H1 (cell line): ENCODE measurements at regions of chr11 and their contacts with region 1.

Region 1: GRCh38 chr11:63478896-63479295 is 12.1 kb downstream of the PLAAT5 start:
- DNase-seq: peak; percentile 23 to 60
- H3K4me3 ChIP-seq: no peak overlapping the region
- H3K27ac ChIP-seq: no peak overlapping the region
- H3K4me1 ChIP-seq: peaks cover 0 to 5% (median 2%) of the 10 kb centered on the region in 4 experiments; a peak in 2 of 7 replicates
- H3K27me3 ChIP-seq: no peaks in the 10 kb centered on the region
- CTCF ChIP-seq: peak in 2 of 3 experiments; percentile 90 to 91; a peak in 3 of 4 replicates
- EP300 ChIP-seq: no peak
- POLR2A ChIP-seq: no peak
- RAD21 ChIP-seq: peak; percentile 98 to 100

Region 2: GRCh38 chr11:63490551-63491239 is 11.8 kb after region 1 on chr11 and contains the start of gene PLAAT5:
- CTCF ChIA-PET with region 1: interaction called, 63 read pairs
- POLR2A ChIA-PET with region 1: interaction called, 11 read pairs
- DNase-seq: peak in 1 of 2 experiments; percentile 73
- H3K4me3 ChIP-seq: peak within 1 kb of the TSS; percentile 53 to 69 (median 61)
- H3K27ac ChIP-seq: 0 out of 2 replicates have a peak within 1 kb of the TSS, but pooled peaks have one; percentile 23
- H3K4me1 ChIP-seq: peaks cover 6 to 10% (median 9%) of the 10 kb centered on the region in 4 experiments; a peak in 5 of 7 replicates
- H3K27me3 ChIP-seq: no peaks in the 10 kb centered on the region; a peak in 1 of 7 replicates
- CTCF ChIP-seq: no peak
- EP300 ChIP-seq: no peak
- POLR2A ChIP-seq: no peak; a peak in 1 of 3 replicates
- RAD21 ChIP-seq: no peak
- total RNA-seq, gene PLAAT5: 12.8 and 16.0 TPM in 2 replicates

Region 3: GRCh38 chr11:63530021-63530420 is 51.1 kb after region 1 on chr11:
- CTCF ChIA-PET with region 1: interaction called, 10 read pairs
- POLR2A ChIA-PET with region 1: interaction called, 3 read pairs
- DNase-seq: no peak
- H3K4me3 ChIP-seq: peak overlapping the region in 3 of 4 experiments; percentile 11 to 37 (median 22); a peak in 4 of 8 replicates
- H3K27ac ChIP-seq: peak overlapping the region; percentile 89
- H3K4me1 ChIP-seq: peaks cover 16 to 31% (median 30%) of the 10 kb centered on the region in 4 experiments; a peak in 6 of 7 replicates
- H3K27me3 ChIP-seq: no peaks in the 10 kb centered on the region
- CTCF ChIP-seq: no peak
- EP300 ChIP-seq: no peak
- POLR2A ChIP-seq: no peak
- RAD21 ChIP-seq: no peak

Region 4: DNA sequence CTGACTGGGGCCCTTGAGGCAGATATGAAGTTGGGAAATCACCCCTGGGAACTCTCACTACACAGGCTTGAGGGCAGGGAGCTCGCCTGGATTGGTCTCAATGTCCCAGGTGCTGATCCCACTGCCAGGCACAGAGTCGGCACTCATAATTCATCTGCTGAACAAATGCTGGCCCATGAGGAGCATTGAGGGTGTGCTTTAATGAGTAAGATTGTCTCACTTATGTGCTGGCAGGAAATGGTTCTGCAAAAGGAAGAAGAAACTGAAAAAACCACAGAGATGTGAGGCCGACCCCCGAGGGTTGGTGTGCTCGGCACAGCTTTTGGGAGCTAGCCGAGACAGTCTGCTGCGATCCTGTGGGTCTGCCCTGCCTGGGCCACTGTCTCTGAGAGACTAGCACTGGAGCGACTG is 74.8 kb after region 1 on chr11:
- CTCF ChIA-PET with region 1: interaction called, 11 read pairs
- POLR2A ChIA-PET with region 1: no interaction called
- DNase-seq: no peak
- H3K4me3 ChIP-seq: no peak overlapping the region
- H3K27ac ChIP-seq: no peak overlapping the region
- H3K4me1 ChIP-seq: peaks cover 0 to 6% (median 2%) of the 10 kb centered on the region in 4 experiments; a peak in 3 of 7 replicates
- H3K27me3 ChIP-seq: no peaks in the 10 kb centered on the region
- CTCF ChIP-seq: no peak
- EP300 ChIP-seq: no peak
- POLR2A ChIP-seq: no peak
- RAD21 ChIP-seq: no peak

Region 5: GRCh38 chr11:63621931-63622782 is 143.3 kb after region 1 on chr11:
- CTCF ChIA-PET with region 1: interaction called, 27 read pairs
- POLR2A ChIA-PET with region 1: no interaction called
- DNase-seq: no peak
- H3K4me3 ChIP-seq: no peak overlapping the region
- H3K27ac ChIP-seq: no peak overlapping the region
- H3K4me1 ChIP-seq: peaks cover 0 to 3% (median under 1%) of the 10 kb centered on the region in 4 experiments; a peak in 5 of 7 replicates
- H3K27me3 ChIP-seq: no peaks in the 10 kb centered on the region
- CTCF ChIP-seq: no peak
- EP300 ChIP-seq: no peak
- POLR2A ChIP-seq: no peak
- RAD21 ChIP-seq: no peak

Region 6: GRCh38 chr11:63635762-63636465 is 157.0 kb after region 1 on chr11:
- CTCF ChIA-PET with region 1: interaction called, 77 read pairs
- POLR2A ChIA-PET with region 1: interaction called, 3 read pairs
- DNase-seq: peak; percentile 17 to 85
- H3K4me3 ChIP-seq: no peak overlapping the region
- H3K27ac ChIP-seq: peak overlapping the region; percentile 11; the same call in 1 of the 2 replicates
- H3K4me1 ChIP-seq: peaks cover 0 to 2% (median 0%) of the 10 kb centered on the region in 4 experiments; a peak in 1 of 7 replicates
- H3K27me3 ChIP-seq: no peaks in the 10 kb centered on the region
- CTCF ChIP-seq: peak; percentile 42 to 84 (median 83)
- EP300 ChIP-seq: no peak
- POLR2A ChIP-seq: no peak
- RAD21 ChIP-seq: peak; percentile 99